ENCODE measurements at regions of chr15 and their contacts with region 1.

Region 1: GRCh38 chr15:32657198-32657883 is 15.8 kb downstream of the SCG5 start:
- DNase-seq: peak; percentile 58
- ATAC-seq: peak; percentile 19
- H3K4me3 ChIP-seq: no peak overlapping the region
- H3K27ac ChIP-seq: peak overlapping the region; percentile 90
- H3K4me1 ChIP-seq: peaks cover 58% of the 10 kb centered on the region
- H3K27me3 ChIP-seq: no peaks in the 10 kb centered on the region
- CTCF ChIP-seq: peak; percentile 53

Region 2: GRCh38 chr15:31472636-31473384 is 1184.5 kb before region 1 on chr15:
- CTCF ChIA-PET with region 1: no interaction called
- POLR2A ChIA-PET with region 1: no interaction called
- intact Hi-C with region 1: no loop called
- DNase-seq: no peak
- ATAC-seq: no peak
- H3K4me3 ChIP-seq: no peak overlapping the region
- H3K27ac ChIP-seq: no peak overlapping the region
- H3K4me1 ChIP-seq: no peaks in the 10 kb centered on the region
- H3K27me3 ChIP-seq: peaks cover 25% of the 10 kb centered on the region
- CTCF ChIP-seq: no peak

Region 3: DNA sequence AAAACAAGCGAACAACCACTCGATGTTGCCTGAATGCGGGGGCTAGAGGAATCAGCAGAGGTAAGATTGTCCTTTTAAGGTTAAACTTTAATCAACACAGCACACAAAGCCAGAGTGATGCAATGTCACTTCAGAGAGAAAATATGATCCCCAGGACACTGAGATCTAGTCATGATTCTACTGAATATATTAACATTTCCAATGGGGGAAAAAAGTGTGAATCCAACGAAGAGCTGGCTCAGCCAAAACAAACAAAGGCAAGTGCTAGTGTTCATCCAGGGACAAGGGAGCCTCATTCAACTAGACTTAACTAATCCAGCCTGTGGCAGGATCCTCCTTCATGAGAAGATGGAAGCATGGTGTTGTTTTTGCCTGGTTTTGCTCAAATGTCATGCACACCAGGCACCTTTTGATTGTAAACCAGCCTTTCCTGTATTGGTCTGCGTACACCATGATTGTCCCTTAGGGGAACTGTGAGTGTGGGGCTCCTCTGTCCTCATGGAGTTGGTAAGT is 20.0 kb after region 1 on chr15:
- CTCF ChIA-PET with region 1: no interaction called
- POLR2A ChIA-PET with region 1: no interaction called
- intact Hi-C with region 1: no loop called
- DNase-seq: no peak
- ATAC-seq: no peak; the same call in 1 of the 2 replicates
- H3K4me3 ChIP-seq: no peak overlapping the region
- H3K27ac ChIP-seq: no peak overlapping the region
- H3K4me1 ChIP-seq: peaks cover 15% of the 10 kb centered on the region
- H3K27me3 ChIP-seq: no peaks in the 10 kb centered on the region
- CTCF ChIP-seq: no peak

Region 4: GRCh38 chr15:32706704-32707103 is 49.4 kb after region 1 on chr15:
- CTCF ChIA-PET with region 1: no interaction called
- POLR2A ChIA-PET with region 1: no interaction called
- intact Hi-C with region 1: loop called (anchors 5 kb)
- DNase-seq: peak; percentile 69
- ATAC-seq: peak; percentile 69
- H3K4me3 ChIP-seq: no peak overlapping the region
- H3K27ac ChIP-seq: peak overlapping the region; percentile 64
- H3K4me1 ChIP-seq: peaks cover 39% of the 10 kb centered on the region
- H3K27me3 ChIP-seq: no peaks in the 10 kb centered on the region
- CTCF ChIP-seq: no peak

Region 5: GRCh38 chr15:32824777-32825176 is 167.4 kb after region 1 on chr15:
- CTCF ChIA-PET with region 1: interaction called, 4 read pairs
- POLR2A ChIA-PET with region 1: no interaction called
- intact Hi-C with region 1: loop called (anchors 1 kb)
- DNase-seq: peak; percentile 97
- ATAC-seq: peak; percentile 74
- H3K4me3 ChIP-seq: peak overlapping the region; percentile 24; the same call in 1 of the 2 replicates
- H3K27ac ChIP-seq: peak overlapping the region; percentile 95
- H3K4me1 ChIP-seq: peaks cover 71% of the 10 kb centered on the region
- H3K27me3 ChIP-seq: no peaks in the 10 kb centered on the region
- CTCF ChIP-seq: peak; percentile 44; the same call in 1 of the 2 replicates

Region 6: DNA sequence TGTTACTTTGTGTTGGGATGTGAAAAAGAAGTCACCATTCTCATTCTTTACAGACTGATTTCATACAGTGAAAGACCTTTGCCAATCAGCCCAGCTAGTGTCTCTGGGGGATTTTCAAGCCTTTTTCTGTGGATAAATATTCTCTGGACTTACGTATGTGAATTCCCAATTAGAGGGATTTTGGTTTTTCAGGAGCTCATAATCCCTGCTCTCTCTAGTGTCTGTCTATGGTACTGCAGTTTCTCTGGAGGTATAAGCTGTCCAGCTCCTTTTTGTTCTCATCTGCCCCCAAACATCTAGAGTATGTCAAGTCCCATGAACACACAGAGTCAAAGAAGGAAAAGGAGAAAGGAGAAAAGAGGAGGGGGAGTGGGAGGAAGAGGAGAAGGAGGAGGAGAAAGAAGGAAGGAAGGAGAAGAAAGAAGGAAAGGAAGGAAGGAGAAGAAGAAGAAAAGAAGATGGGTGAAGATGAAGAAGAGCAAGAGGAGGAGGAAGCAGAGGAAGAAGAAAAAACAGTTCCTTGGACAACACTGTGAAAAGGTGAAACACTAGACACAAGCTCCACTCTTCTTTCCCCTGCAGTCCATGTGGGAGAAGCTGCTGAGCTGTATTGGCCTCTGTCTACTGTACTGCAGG is 279.1 kb after region 1 on chr15:
- CTCF ChIA-PET with region 1: interaction called, 4 read pairs
- POLR2A ChIA-PET with region 1: no interaction called
- intact Hi-C with region 1: loop called (anchors 1 kb)
- DNase-seq: peak; percentile 65
- ATAC-seq: peak; percentile 46; the same call in 1 of the 2 replicates
- H3K4me3 ChIP-seq: no peak overlapping the region
- H3K27ac ChIP-seq: no peak overlapping the region
- H3K4me1 ChIP-seq: no peaks in the 10 kb centered on the region
- H3K27me3 ChIP-seq: no peaks in the 10 kb centered on the region
- CTCF ChIP-seq: peak; percentile 80

Region 7: GRCh38 chr15:32994810-32995424 is 337.6 kb after region 1 on chr15:
- CTCF ChIA-PET with region 1: interaction called, 3 read pairs
- POLR2A ChIA-PET with region 1: no interaction called
- intact Hi-C with region 1: loop called (anchors 1 kb)
- DNase-seq: peak; percentile 69
- ATAC-seq: peak; percentile 61
- H3K4me3 ChIP-seq: no peak overlapping the region
- H3K27ac ChIP-seq: no peak overlapping the region
- H3K4me1 ChIP-seq: 0 out of 2 replicates have a peak, but pooled peaks cover 3% of the 10 kb centered on the region
- H3K27me3 ChIP-seq: no peaks in the 10 kb centered on the region
- CTCF ChIP-seq: peak; percentile 81

Region 8: DNA sequence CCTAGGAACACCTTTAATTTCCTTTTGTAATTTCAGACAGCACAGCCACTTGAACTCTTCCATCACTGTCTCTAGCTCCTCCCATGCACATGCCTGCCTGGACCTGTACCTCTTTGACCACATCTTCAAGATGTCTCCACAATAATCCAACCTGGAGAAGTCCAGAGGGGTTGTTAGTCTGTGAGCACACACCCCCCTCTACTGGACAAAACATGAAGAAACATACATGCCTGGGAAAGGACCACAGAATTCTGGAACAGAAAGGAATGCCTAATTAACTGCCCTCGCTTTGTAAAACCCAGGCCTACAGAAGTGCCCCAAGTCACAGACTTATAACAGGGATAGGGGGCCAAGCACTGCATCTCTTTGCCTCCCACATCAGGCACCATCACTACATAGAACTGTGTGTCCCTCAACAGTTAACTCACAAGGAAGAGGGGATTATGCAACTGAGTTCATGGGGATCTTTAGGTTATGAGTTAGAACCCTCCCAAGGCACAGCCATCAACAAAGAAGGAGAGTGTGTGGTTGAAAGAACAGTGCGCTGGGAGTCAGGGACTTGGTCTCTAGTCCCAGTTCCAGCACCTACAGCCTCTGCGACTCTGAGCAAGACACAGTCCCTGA is 475.5 kb after region 1 on chr15:
- CTCF ChIA-PET with region 1: no interaction called
- POLR2A ChIA-PET with region 1: no interaction called
- intact Hi-C with region 1: loop called (anchors 1 kb)
- DNase-seq: peak; percentile 85
- ATAC-seq: peak; percentile 96
- H3K4me3 ChIP-seq: no peak overlapping the region
- H3K27ac ChIP-seq: no peak overlapping the region
- H3K4me1 ChIP-seq: peaks cover 16% of the 10 kb centered on the region
- H3K27me3 ChIP-seq: no peaks in the 10 kb centered on the region
- CTCF ChIP-seq: peak; percentile 91